ENCODE measurements at regions of chr1 and their contacts with region 1.

Region 1: GRCh38 chr1:224922404-224923164 is 6.9 kb upstream of the DNAH14 start:
- DNase-seq: peak; percentile 1
- H3K4me3 ChIP-seq: no peak overlapping the region
- H3K27ac ChIP-seq: no peak overlapping the region
- H3K27me3 ChIP-seq: no peaks in the 10 kb centered on the region
- CTCF ChIP-seq: peak; percentile 82

Region 2: GRCh38 chr1:224116131-224116530 is 806.5 kb before region 1 on chr1:
- CTCF ChIA-PET with region 1: interaction called, 11 read pairs
- POLR2A ChIA-PET with region 1: no interaction called
- DNase-seq: peak; percentile 21
- H3K4me3 ChIP-seq: no peak overlapping the region; the same call in 1 of the 2 replicates
- H3K27ac ChIP-seq: no peak overlapping the region
- H3K27me3 ChIP-seq: no peaks in the 10 kb centered on the region
- CTCF ChIP-seq: peak; percentile 49

Region 3: GRCh38 chr1:224906340-224906739 is 16.2 kb before region 1 on chr1:
- CTCF ChIA-PET with region 1: interaction called, 13 read pairs
- POLR2A ChIA-PET with region 1: no interaction called
- DNase-seq: no peak
- H3K4me3 ChIP-seq: no peak overlapping the region
- H3K27ac ChIP-seq: no peak overlapping the region
- H3K27me3 ChIP-seq: peaks cover 13% of the 10 kb centered on the region
- CTCF ChIP-seq: no peak